ENCODE measurements at regions of chr9 and their contacts with region 1.

Region 1: GRCh38 chr9:20382460-20383071 is 239.7 kb downstream of the MLLT3 start:
- DNase-seq: peak; percentile 66 to 96 (median 91)
- H3K4me3 ChIP-seq: peak overlapping the region in 6 of 7 experiments; percentile 64 to 97 (median 90)
- H3K27ac ChIP-seq: peak overlapping the region; percentile 64 to 89
- H3K4me1 ChIP-seq: peaks cover 8 to 45% (median 28%) of the 10 kb centered on the region in 4 experiments
- H3K27me3 ChIP-seq: no peaks in the 10 kb centered on the region

Region 2: GRCh38 chr9:20394969-20395368 is 12.4 kb after region 1 on chr9:
- CTCF ChIA-PET with region 1: interaction called, 17 read pairs
- POLR2A ChIA-PET with region 1: interaction called, 3 read pairs
- DNase-seq: peak in 1 of 3 donors; percentile 42
- H3K4me3 ChIP-seq: no peak overlapping the region
- H3K27ac ChIP-seq: no peak overlapping the region
- H3K4me1 ChIP-seq: peaks cover 38 to 56% (median 41%) of the 10 kb centered on the region in 4 experiments
- H3K27me3 ChIP-seq: no peaks in the 10 kb centered on the region

Region 3: GRCh38 chr9:20407012-20407411 is 24.4 kb after region 1 on chr9:
- CTCF ChIA-PET with region 1: interaction called, 11 read pairs
- POLR2A ChIA-PET with region 1: no interaction called
- DNase-seq: peak in 1 of 3 donors; percentile 33
- H3K4me3 ChIP-seq: no peak overlapping the region
- H3K27ac ChIP-seq: no peak overlapping the region
- H3K4me1 ChIP-seq: peaks cover 6 to 38% (median 17%) of the 10 kb centered on the region in 4 experiments
- H3K27me3 ChIP-seq: no peaks in the 10 kb centered on the region

Measured in common myeloid progenitor, CD34-positive (primary cell).